Stomach (tissue), 19 donors: ENCODE measurements at regions of chr20 and their contacts with region 1.

Region 1: DNA sequence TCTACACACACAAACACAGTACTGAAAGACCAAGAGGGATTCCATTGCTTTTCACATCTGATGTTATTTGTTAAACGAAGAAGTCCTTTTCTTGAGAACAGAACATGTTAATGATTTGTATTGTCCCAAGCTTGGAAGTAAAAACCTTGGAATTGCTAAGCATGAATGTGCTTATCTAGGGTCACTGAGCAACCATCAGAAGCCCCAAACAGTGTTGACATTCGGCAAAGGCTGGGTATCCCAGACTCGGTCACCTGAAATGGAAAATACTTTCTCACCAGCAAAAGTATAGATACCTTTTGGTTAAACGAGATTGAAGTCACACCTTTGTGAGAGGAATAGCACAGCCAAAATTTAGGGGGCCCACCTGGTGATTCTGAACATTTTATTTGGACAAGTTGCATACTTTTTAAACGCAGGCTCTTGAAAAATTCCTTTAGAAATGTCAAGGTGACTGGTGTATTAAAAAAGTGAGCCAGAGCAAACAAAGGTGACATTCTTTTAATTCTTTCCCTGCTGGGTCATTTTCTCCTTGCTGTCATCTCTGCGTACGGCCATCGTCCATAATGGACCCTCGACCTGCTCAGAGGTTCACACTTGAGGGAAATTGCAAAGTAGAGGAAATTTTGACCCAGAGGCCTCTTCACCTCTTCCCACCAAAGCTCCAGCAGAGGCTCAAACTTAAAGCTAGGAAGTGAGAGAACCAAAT is 95.8 kb upstream of the FOXA2 start:
- DNase-seq: no peak
- H3K4me3 ChIP-seq: no peak overlapping the region
- H3K27ac ChIP-seq: no peak overlapping the region
- H3K4me1 ChIP-seq: peaks cover 0 to 9% (median 3%) of the 10 kb centered on the region in 4 donors
- H3K27me3 ChIP-seq: peaks cover 0 to 12% (median 0%) of the 10 kb centered on the region in 3 donors
- CTCF ChIP-seq: no peak
- EP300 ChIP-seq: no peak
- POLR2A ChIP-seq: no peak

Region 2: DNA sequence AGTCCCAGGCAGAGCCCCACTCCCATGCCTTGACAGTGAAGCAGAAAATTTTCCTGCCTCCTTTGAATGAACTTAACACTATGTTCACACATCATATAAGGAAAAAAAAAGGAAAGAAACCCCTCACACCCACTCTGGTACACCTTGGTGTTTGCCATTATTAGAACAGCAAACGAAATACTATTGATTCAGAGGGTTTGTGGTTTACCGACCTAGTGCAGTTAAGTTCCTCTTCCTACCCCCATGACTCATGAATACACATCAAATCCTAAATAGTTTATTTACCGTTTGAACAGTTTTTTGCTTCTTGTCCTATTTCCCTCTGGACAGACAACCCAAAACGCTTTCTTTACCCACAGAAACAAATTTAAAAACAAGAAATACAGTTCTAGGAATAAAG is 333.5 kb before region 1 on chr20:
- intact Hi-C with region 1: loop called (anchors 2 kb)
- DNase-seq: no peak
- H3K4me3 ChIP-seq: no peak overlapping the region
- H3K27ac ChIP-seq: no peak overlapping the region
- H3K4me1 ChIP-seq: no peaks in the 10 kb centered on the region
- H3K27me3 ChIP-seq: peaks cover 0 to 12% (median 0%) of the 10 kb centered on the region in 3 donors
- CTCF ChIP-seq: no peak
- EP300 ChIP-seq: no peak
- POLR2A ChIP-seq: no peak

Region 3: DNA sequence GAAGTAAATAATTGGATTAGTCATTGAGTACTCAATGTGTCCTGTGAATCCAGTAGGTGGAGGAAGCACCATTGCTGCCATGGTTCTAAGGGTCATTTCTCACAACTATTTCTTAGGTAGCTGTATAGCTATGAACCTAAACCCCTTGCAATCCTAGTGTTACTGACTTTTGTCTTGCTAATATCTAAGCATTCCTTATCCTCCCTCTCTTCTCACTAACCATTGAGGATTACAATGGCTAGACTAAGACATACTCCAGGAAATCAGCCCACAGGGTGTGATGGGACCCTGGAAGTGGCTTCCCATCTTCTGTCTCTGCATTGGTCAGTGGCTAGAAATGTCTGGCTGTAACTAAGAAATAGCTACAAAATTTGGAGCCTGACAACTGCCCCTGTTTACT is 68.5 kb before region 1 on chr20:
- intact Hi-C with region 1: no loop called
- DNase-seq: peak in 1 of 2 donors; percentile 33
- H3K4me3 ChIP-seq: no peak overlapping the region
- H3K27ac ChIP-seq: peak overlapping the region in 3 of 5 donors; percentile 47 to 65 (median 61)
- H3K4me1 ChIP-seq: peaks cover 0 to 6% (median 0%) of the 10 kb centered on the region in 4 donors
- H3K27me3 ChIP-seq: peaks cover 0 to 5% (median 0%) of the 10 kb centered on the region in 3 donors
- CTCF ChIP-seq: no peak
- EP300 ChIP-seq: no peak
- POLR2A ChIP-seq: no peak